ENCODE measurements at regions of chr4 and their contacts with region 1.

Region 1: DNA sequence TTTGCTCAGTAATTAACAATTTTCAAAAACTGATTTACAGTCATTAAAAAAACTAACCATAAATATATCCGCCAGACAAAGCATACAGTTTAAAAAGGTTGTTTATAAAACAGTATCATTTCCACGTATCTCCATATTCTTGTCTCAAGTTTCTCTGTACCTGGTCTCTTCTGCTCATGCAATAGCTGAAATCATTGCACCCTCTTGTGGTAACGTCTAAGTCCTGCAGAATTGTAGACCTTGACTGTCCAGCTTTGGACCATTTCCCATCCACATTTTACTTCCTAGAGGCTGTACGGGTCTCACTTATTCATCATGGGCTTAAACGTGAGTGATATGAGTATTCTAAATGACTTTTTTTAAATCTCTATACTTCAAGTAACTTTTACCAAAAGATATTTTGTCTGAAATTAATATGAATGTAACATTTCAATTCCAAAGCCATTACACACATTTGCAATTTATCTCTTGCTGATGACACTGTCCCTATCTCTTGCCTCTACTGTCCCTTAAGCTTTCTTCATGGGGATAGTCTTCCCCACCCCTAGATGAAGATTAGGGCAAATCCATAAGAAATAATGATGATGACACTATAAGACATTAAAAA is 118.5 kb downstream of the BTC start:
- DNase-seq: no peak
- H3K4me3 ChIP-seq: no peak overlapping the region
- H3K27ac ChIP-seq: no peak overlapping the region
- H3K4me1 ChIP-seq: peaks cover 0 to 5% (median 0%) of the 10 kb centered on the region in 4 donors
- H3K27me3 ChIP-seq: no peaks in the 10 kb centered on the region
- CTCF ChIP-seq: peak; percentile 65 to 85 (median 74)
- EP300 ChIP-seq: no peak
- POLR2A ChIP-seq: no peak

Region 2: GRCh38 chr4:74189331-74190043 is 486.3 kb before region 1 on chr4:
- in situ Hi-C with region 1: loop called in 1 of 4 experiments (anchors 25 kb)
- intact Hi-C with region 1: no loop called
- DNase-seq: no peak
- H3K4me3 ChIP-seq: no peak overlapping the region
- H3K27ac ChIP-seq: no peak overlapping the region
- H3K4me1 ChIP-seq: no peaks in the 10 kb centered on the region
- H3K27me3 ChIP-seq: no peaks in the 10 kb centered on the region
- CTCF ChIP-seq: peak; percentile 53 to 64 (median 62)
- EP300 ChIP-seq: no peak
- POLR2A ChIP-seq: no peak

Region 3: GRCh38 chr4:74320559-74321118 is 355.1 kb before region 1 on chr4:
- in situ Hi-C with region 1: loop called in 1 of 4 experiments (anchors 10 kb)
- intact Hi-C with region 1: no loop called
- DNase-seq: peak; percentile 43
- H3K4me3 ChIP-seq: no peak overlapping the region
- H3K27ac ChIP-seq: no peak overlapping the region
- H3K4me1 ChIP-seq: peaks cover 0 to 4% (median 0%) of the 10 kb centered on the region in 4 donors
- H3K27me3 ChIP-seq: no peaks in the 10 kb centered on the region
- CTCF ChIP-seq: peak; percentile 20 to 67 (median 55)
- EP300 ChIP-seq: no peak
- POLR2A ChIP-seq: no peak

Region 4: DNA sequence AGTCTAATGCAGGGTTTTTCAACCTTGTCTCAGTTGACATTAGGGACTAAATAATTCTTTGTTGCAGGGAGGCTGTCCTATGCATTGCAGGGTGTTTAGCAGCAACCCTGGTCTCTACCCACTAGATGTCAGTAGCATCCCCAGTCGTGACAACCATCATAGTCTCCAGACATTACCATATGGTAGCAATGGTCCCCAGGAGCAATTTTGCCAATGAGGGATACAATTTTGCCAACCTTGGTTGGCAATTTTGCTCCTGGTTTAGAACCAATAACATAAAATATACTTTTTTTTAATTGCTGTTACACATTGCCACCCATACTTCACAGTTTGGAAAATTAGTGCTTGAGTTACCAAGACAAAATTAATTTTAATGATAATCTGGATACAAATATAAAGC is 304.9 kb before region 1 on chr4:
- in situ Hi-C with region 1: loop called in 1 of 4 experiments (anchors 10 kb)
- intact Hi-C with region 1: loop called (anchors 5 kb)
- DNase-seq: peak; percentile 42
- H3K4me3 ChIP-seq: no peak overlapping the region
- H3K27ac ChIP-seq: no peak overlapping the region
- H3K4me1 ChIP-seq: peaks cover 0 to 39% (median 7%) of the 10 kb centered on the region in 4 donors
- H3K27me3 ChIP-seq: peaks cover 2% of the 10 kb centered on the region
- CTCF ChIP-seq: peak; percentile 51 to 67 (median 60)
- EP300 ChIP-seq: no peak
- POLR2A ChIP-seq: no peak

Region 5: DNA sequence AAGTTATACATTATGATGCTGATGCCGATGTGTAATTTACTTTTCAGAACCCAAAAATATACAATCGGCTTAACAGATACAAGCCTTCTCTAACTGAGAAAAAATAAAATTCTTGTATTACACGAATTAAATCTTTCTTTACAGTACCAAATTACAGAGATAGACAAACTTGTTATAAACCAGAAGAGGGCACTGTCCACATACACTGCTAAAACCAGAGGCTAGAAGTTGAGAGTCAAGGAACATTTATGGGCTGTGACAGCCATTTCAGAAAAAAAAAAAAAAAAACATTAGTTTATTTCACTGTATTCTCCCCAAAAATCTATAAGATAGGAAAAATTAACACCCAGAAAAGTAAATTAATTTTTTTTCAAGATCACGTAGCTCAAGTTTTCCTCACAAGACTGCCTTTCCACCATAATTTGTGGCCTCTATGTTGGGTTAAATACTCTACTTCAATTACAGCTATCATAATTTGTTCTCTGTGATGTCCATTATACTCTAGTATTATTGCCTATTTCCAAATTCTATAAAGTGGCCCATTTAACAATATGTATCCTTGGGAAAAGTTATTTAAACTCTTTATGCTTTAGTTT is 298.8 kb before region 1 on chr4:
- in situ Hi-C with region 1: loop called in 2 of 4 experiments (anchors 10 kb)
- intact Hi-C with region 1: loop called (anchors 5 kb)
- DNase-seq: no peak
- H3K4me3 ChIP-seq: no peak overlapping the region
- H3K27ac ChIP-seq: peak overlapping the region in 2 of 4 donors; percentile 84 to 85
- H3K4me1 ChIP-seq: peaks cover 0 to 25% (median 11%) of the 10 kb centered on the region in 4 donors
- H3K27me3 ChIP-seq: no peaks in the 10 kb centered on the region
- CTCF ChIP-seq: peak; percentile 55 to 84 (median 64)
- EP300 ChIP-seq: no peak
- POLR2A ChIP-seq: no peak

Region 6: GRCh38 chr4:74385386-74385785 is 290.4 kb before region 1 on chr4:
- in situ Hi-C with region 1: loop called in 1 of 4 experiments (anchors 10 kb)
- intact Hi-C with region 1: no loop called
- DNase-seq: no peak
- H3K4me3 ChIP-seq: no peak overlapping the region
- H3K27ac ChIP-seq: no peak overlapping the region
- H3K4me1 ChIP-seq: no peaks in the 10 kb centered on the region
- H3K27me3 ChIP-seq: no peaks in the 10 kb centered on the region
- CTCF ChIP-seq: no peak
- EP300 ChIP-seq: no peak
- POLR2A ChIP-seq: no peak

Region 7: DNA sequence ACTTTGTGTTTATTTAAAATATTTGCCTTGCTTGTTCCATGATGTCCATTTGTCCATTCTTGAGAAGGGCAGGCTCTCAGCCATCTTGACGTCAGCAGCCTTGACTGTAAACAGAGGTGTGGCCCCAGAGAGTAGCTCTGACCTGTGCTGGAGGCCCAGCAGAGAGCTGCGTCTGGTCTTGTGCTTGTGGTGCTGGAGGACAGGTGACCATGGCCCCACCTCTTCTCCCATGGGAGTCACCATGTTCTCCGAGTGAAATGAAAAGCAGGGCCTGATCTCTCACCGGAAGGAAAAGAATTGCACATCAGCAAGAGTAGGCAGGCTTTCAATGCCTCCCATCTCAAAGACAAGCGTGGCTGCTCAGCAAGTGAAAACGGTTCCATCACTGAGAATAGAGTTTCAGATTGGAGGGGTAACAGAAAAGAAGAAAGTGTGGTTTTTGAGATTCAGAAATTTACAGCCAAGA is 268.6 kb after region 1 on chr4:
- in situ Hi-C with region 1: no loop called
- intact Hi-C with region 1: no loop called
- DNase-seq: peak; percentile 57
- H3K4me3 ChIP-seq: no peak overlapping the region
- H3K27ac ChIP-seq: no peak overlapping the region
- H3K4me1 ChIP-seq: peaks cover 0 to 52% (median 17%) of the 10 kb centered on the region in 4 donors
- H3K27me3 ChIP-seq: no peaks in the 10 kb centered on the region
- CTCF ChIP-seq: no peak
- EP300 ChIP-seq: no peak
- POLR2A ChIP-seq: no peak